Esophagus muscularis mucosa (tissue), 4 donors: ENCODE measurements at regions of chr14 and their contacts with region 1.

Region 1: GRCh38 chr14:102524466-102525218 is 15.1 kb upstream of the ANKRD9 start:
- DNase-seq: peak; percentile 99
- H3K4me3 ChIP-seq: peak overlapping the region; percentile 62 to 78 (median 71)
- H3K27ac ChIP-seq: peak overlapping the region; percentile 76 to 88 (median 85)
- H3K4me1 ChIP-seq: peaks cover 13 to 23% (median 20%) of the 10 kb centered on the region in 4 donors
- H3K27me3 ChIP-seq: no peaks in the 10 kb centered on the region
- CTCF ChIP-seq: peak in 2 of 3 experiments; percentile 99
- EP300 ChIP-seq: no peak
- POLR2A ChIP-seq: no peak

Region 2: GRCh38 chr14:102235275-102235897 is 289.3 kb before region 1 on chr14:
- intact Hi-C with region 1: loop called (anchors 5 kb)
- DNase-seq: no peak
- H3K4me3 ChIP-seq: peak overlapping the region; percentile 27 to 41 (median 30)
- H3K27ac ChIP-seq: peak overlapping the region in 2 of 4 donors; percentile 33 to 39
- H3K4me1 ChIP-seq: peaks cover 8 to 16% (median 10%) of the 10 kb centered on the region in 4 donors
- H3K27me3 ChIP-seq: no peaks in the 10 kb centered on the region
- CTCF ChIP-seq: peak; percentile 81 to 89 (median 87)
- EP300 ChIP-seq: no peak
- POLR2A ChIP-seq: no peak

Region 3: DNA sequence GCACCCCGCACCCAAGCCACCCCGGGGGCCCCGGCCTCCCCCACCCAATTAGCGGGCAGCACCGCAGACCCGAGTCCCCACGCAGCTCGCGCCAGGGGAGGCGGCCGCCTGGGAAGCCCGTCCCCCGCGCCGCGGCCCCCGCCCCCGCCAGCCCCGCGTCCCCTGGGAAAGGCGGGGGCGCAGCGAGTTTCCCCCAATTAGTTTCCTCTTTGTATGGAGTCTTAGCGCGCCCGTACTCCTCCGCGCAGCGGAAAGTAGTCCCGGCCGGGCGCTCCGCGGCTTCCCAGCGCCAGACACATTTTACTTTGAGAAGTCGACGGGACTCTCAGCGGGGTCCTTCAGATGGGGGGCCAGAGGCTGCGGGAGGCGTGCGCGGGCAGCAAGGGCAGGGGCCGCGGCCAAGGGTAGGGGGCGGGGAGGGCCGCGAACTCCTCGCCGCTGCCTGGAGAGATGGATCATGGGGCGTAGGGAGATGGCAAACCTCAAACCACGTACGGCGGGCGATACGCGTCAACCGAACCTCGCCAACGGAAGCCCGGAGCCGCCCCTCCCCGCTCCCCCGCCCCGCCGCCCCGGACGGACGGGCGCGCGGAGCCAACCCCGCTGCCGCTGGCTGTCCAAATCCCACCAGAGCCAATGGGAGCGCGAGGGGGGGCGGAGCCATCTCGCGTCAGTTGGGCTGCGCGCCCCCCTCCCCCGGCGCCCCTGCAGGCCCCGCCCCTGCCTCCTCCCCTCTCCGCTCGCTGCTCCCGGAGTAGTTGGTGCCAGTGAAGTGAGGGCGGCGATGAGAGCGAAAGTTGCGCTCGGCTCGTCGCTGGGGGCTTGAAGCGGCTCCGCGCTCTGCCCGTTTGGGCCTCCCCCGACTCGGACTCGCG is 67.5 kb after region 1 on chr14 and contains the start of gene RCOR1:
- intact Hi-C with region 1: loop called (anchors 5 kb)
- DNase-seq: peak; percentile 99
- H3K4me3 ChIP-seq: peak within 1 kb of the TSS; percentile 76 to 98 (median 90)
- H3K27ac ChIP-seq: peak within 1 kb of the TSS; percentile 90 to 99 (median 96)
- H3K4me1 ChIP-seq: peaks cover 19 to 43% (median 38%) of the 10 kb centered on the region in 4 donors
- H3K27me3 ChIP-seq: no peaks in the 10 kb centered on the region
- CTCF ChIP-seq: no peak
- EP300 ChIP-seq: no peak
- POLR2A ChIP-seq: peak; percentile 9
- total RNA-seq, gene RCOR1: 12.9 to 14.8 (median 13.8) TPM

Region 4: GRCh38 chr14:102694530-102695166 is 170.0 kb after region 1 on chr14:
- intact Hi-C with region 1: loop called (anchors 10 kb)
- DNase-seq: no peak
- H3K4me3 ChIP-seq: no peak overlapping the region
- H3K27ac ChIP-seq: no peak overlapping the region
- H3K4me1 ChIP-seq: peaks cover 8 to 46% (median 23%) of the 10 kb centered on the region in 4 donors
- H3K27me3 ChIP-seq: no peaks in the 10 kb centered on the region
- CTCF ChIP-seq: peak; percentile 60 to 81 (median 74)
- EP300 ChIP-seq: no peak
- POLR2A ChIP-seq: no peak

Region 5: GRCh38 chr14:102917469-102918211 is 393.0 kb after region 1 on chr14:
- intact Hi-C with region 1: loop called (anchors 5 kb)
- DNase-seq: no peak
- H3K4me3 ChIP-seq: no peak overlapping the region
- H3K27ac ChIP-seq: no peak overlapping the region
- H3K4me1 ChIP-seq: peaks cover under 1 to 3% (median 1%) of the 10 kb centered on the region in 4 donors
- H3K27me3 ChIP-seq: peaks cover 0 to 14% (median 2%) of the 10 kb centered on the region in 4 donors
- CTCF ChIP-seq: peak; percentile 62 to 69 (median 62)
- EP300 ChIP-seq: no peak
- POLR2A ChIP-seq: no peak